ENCODE measurements at regions of chr9 and their contacts with region 1.

Region 1: DNA sequence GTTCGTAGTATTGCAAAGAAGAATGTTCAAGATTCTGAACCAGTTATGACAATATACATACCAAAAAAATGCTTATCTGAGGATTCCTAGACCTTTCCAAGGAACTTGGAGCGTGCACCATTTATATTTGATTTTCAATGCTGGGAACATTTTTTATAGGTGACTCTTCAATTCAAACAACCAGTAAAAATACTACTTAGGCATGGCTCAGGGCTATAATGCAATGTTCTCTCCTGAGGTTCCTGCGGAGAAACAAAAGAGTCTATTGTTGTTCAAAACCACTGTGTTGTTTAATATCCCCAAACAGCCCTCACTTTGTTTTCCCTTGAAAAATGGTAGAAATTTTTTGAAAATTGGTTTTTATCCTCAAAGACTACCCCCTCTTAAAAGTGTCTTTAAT is 335.7 kb upstream of the IZUMO3 start:
- DNase-seq: no peak
- H3K4me3 Mint-ChIP-seq: no peak overlapping the region
- H3K27ac Mint-ChIP-seq: no peak overlapping the region
- H3K4me1 Mint-ChIP-seq: no peaks in the 10 kb centered on the region
- H3K27me3 Mint-ChIP-seq: no peaks in the 10 kb centered on the region

Region 2: DNA sequence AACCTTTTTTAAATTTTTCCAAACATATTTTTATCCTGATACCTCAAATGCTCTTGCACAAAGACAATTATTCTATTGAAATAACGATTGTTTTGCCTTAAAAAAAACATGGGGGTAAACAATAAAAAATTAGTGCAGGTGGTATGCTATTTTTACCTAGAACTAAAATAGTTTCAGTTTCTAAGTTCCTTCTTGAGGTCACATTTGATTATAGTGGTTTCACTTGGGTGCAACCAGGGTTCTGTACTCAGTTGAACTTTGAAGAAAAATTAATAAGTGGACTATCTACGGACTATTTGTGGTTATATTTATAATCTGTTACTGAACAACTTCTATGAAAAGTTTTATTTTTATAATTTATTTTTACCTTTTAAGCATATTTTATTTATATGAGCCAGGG is 51.4 kb after region 1 on chr9:
- intact Hi-C with region 1: loop called (anchors 5 kb)
- DNase-seq: no peak
- H3K4me3 Mint-ChIP-seq: no peak overlapping the region
- H3K27ac Mint-ChIP-seq: no peak overlapping the region
- H3K4me1 Mint-ChIP-seq: no peaks in the 10 kb centered on the region
- H3K27me3 Mint-ChIP-seq: no peaks in the 10 kb centered on the region